ENCODE measurements at regions of chr22 and their contacts with region 1.

Region 1: GRCh38 chr22:40679964-40680818 is 907 bp downstream of the MCHR1 start:
- DNase-seq: no peak
- H3K4me3 Mint-ChIP-seq: no peak overlapping the region
- H3K27ac Mint-ChIP-seq: no peak overlapping the region
- H3K4me1 Mint-ChIP-seq: peaks cover 8% of the 10 kb centered on the region
- H3K27me3 Mint-ChIP-seq: peaks cover 56% of the 10 kb centered on the region
- CTCF ChIP-seq: no peak

Region 2: GRCh38 chr22:40759294-40759840 is 79.2 kb after region 1 on chr22:
- CTCF ChIA-PET with region 1: interaction called, 51 read pairs
- intact Hi-C with region 1: loop called (anchors 1 kb)
- DNase-seq: no peak
- H3K4me3 Mint-ChIP-seq: no peak overlapping the region
- H3K27ac Mint-ChIP-seq: no peak overlapping the region
- H3K4me1 Mint-ChIP-seq: peaks cover under 1% of the 10 kb centered on the region
- H3K27me3 Mint-ChIP-seq: no peaks in the 10 kb centered on the region
- CTCF ChIP-seq: no peak

Region 3: DNA sequence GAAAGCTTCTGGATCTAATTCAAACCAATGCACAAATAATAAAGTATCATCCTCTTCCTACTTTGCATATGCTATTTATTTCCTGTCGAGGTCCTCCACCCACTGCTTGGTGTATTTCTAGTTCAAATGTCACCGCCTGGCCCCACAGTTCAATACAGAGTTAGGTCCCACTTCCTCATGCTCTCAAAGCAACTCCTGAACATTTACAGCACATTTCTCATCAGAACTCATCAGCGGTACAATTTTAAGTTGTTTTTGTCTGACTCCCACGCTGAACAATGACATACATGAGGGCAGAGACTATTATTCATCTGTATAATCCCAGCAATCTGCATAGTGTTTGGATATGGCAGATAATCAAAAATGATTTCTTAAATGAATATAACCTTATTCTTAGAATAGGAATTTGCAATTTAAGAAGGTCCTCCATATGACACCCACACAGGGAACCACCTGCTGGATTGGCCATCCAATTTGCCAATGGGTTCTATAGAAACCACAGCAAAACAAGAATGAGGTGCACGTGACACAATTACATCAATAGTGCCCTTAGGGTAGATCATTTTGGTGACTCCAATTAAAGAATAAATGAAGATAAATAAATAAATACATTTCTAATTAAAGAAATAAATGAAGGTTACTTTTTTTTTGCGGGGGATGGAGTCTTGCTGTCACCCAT is 84.7 kb after region 1 on chr22:
- CTCF ChIA-PET with region 1: interaction called, 51 read pairs
- intact Hi-C with region 1: loop called (anchors 1 kb)
- DNase-seq: no peak
- H3K4me3 Mint-ChIP-seq: no peak overlapping the region
- H3K27ac Mint-ChIP-seq: no peak overlapping the region
- H3K4me1 Mint-ChIP-seq: peaks cover 8% of the 10 kb centered on the region
- H3K27me3 Mint-ChIP-seq: no peaks in the 10 kb centered on the region
- CTCF ChIP-seq: no peak

Region 4: GRCh38 chr22:40898850-40899357 is 218.7 kb after region 1 on chr22:
- CTCF ChIA-PET with region 1: interaction called, 11 read pairs
- intact Hi-C with region 1: no loop called
- DNase-seq: no peak
- H3K4me3 Mint-ChIP-seq: no peak overlapping the region
- H3K27ac Mint-ChIP-seq: no peak overlapping the region
- H3K4me1 Mint-ChIP-seq: no peaks in the 10 kb centered on the region
- H3K27me3 Mint-ChIP-seq: no peaks in the 10 kb centered on the region
- CTCF ChIP-seq: no peak

Region 5: DNA sequence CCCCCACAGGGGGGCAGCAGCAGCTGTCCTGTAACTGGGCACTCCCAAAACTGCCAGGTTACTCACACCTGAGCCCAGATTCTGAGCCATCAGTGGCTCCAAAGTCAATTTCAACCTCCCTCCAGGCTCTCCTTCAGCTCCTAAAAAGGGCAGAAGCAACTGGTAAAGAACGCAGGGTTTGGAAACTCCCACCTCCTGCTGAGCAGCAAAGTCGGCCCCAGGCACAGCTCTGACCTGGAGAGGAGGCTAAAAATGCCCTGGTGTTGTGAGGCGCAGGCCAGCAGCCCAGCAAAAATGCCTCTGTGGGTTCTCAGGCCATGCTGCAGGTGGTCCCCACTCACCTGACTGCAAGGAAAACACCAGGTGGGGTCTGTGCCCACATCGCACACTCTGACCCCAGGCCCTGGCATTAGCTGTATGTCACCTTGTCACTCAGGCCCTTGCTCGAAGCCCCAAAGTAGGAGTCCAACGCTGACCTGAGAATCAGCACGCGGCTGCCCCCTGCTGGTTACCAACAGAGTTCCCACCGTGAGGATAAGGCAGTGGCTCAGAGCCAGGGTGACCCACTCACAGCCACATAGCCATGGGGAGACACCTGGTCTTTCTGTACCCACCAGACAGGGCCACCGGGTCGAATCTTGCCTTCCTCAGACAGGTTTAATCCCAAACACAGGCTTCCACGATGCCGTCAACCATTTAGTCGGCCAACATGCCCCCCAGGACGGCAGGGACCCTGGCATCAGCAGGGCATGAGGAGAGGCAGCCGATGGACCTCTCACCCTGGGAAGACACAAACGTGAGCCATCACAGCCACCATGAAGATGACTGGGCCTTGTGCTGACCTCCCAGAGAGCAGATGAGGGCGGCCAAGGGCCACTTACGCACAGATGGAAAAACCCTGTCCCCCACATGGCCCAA is 853.0 kb after region 1 on chr22:
- CTCF ChIA-PET with region 1: interaction called, 11 read pairs
- intact Hi-C with region 1: no loop called
- DNase-seq: peak; percentile 79
- H3K4me3 Mint-ChIP-seq: no peak overlapping the region
- H3K27ac Mint-ChIP-seq: no peak overlapping the region
- H3K4me1 Mint-ChIP-seq: no peaks in the 10 kb centered on the region
- H3K27me3 Mint-ChIP-seq: no peaks in the 10 kb centered on the region
- CTCF ChIP-seq: peak; percentile 78

Measured in Calu3 (cell line).